Breast epithelium (tissue), 4 donors: ENCODE measurements at regions of chr2 and their contacts with region 1.

Region 1: GRCh38 chr2:176638167-176639015 is 369.1 kb downstream of the MTX2 start:
- DNase-seq: peak; percentile 27 to 70
- H3K4me3 ChIP-seq: peak overlapping the region; percentile 60 to 89 (median 77)
- H3K27ac ChIP-seq: no peak overlapping the region
- H3K4me1 ChIP-seq: no peaks in the 10 kb centered on the region
- H3K27me3 ChIP-seq: peaks cover 0 to 36% of the 10 kb centered on the region in 2 donors
- CTCF ChIP-seq: peak in 2 of 3 donors; percentile 28 to 82
- POLR2A ChIP-seq: no peak

Region 2: DNA sequence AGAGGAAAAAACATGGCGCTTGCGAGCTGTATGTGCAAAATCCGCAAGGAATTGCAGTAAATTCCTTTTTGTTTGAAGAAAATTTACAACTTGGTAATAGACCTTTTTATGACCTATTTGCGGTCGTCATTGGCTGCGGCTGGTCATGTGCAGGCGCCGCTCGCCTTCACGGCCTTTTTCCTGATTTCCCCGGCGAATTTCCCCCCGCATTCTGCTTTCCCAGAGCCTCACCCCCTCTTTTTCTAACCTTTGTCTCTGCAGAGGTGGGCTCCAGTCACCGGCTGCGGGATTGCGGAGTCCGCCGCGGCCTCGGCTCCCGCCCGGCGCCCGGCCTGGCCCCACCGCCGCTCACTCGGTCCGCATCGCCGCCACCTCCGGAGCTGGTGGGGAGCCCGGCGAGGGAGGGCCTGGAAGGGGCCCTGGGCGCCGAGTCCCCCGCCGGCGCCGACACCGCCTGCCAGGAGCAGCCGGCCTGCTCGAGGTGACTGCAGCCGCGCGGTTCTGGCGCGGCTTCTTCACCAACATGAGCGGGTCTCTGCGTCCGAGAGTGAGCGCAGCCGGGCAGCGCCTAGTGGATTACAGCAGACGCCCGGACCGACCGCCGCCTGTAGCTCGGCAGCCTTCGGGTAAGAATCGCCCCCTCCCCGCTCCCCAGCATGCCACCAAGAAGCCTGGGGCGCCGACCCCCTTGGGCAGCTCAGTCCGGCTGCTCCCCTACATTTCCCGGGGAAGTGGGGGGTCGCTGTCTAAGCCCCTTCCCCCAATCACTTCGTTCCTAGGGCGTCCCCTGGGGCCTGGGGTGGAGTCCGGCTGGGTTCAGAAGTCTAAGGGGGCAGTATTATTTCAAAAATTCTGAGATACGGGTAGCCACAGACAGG is 501.8 kb before region 1 on chr2:
- intact Hi-C with region 1: loop called (anchors 5 kb)
- DNase-seq: peak in 1 of 2 donors; percentile 47
- H3K4me3 ChIP-seq: peak overlapping the region; percentile 52 to 82 (median 71)
- H3K27ac ChIP-seq: peak overlapping the region; percentile 84 to 97
- H3K4me1 ChIP-seq: peaks cover 0 to 8% of the 10 kb centered on the region in 2 donors
- H3K27me3 ChIP-seq: peaks cover 0 to 88% of the 10 kb centered on the region in 2 donors
- CTCF ChIP-seq: no peak
- POLR2A ChIP-seq: no peak

Region 3: DNA sequence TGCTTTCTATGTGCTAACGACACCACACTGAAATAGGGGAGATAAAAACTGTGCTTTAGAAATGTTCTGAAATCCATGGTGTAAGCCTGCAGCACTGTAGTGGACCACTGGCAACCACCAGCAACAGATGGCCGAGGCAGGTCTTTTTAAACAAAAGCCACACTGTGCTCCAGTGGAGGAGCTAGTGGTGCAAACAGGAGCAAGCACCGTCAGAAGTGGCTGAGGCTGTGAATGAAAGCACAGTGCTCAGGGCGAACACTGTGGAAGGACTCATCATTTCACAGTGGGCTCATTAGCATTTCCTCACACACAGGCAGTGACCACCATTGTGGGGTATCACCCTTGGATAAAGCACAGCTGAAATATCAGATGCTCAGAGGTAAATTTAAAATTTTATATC is 392.1 kb before region 1 on chr2:
- intact Hi-C with region 1: no loop called
- DNase-seq: no peak
- H3K4me3 ChIP-seq: no peak overlapping the region
- H3K27ac ChIP-seq: no peak overlapping the region
- H3K4me1 ChIP-seq: no peaks in the 10 kb centered on the region
- H3K27me3 ChIP-seq: no peaks in the 10 kb centered on the region
- CTCF ChIP-seq: no peak
- POLR2A ChIP-seq: no peak

Region 4: DNA sequence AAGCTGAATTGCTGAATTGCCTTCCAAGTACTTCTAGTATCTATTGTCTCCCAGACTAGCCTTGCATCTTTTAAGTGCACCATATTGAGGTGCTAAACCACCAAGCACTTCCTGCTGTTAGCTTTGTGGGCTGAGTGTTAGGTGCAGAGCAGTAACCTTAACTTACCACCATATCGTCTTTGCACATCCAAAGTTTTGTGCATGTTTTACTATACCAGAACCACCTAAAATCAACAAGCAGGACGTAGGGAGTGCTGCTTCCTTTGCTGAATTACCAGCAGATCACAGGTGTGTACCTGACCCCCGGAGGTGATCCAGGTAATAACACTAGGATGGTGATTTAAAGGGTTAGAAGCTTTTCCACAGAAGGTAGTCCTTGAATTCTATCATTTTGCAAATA is 214.3 kb after region 1 on chr2:
- intact Hi-C with region 1: no loop called
- DNase-seq: no peak
- H3K4me3 ChIP-seq: no peak overlapping the region
- H3K27ac ChIP-seq: no peak overlapping the region
- H3K4me1 ChIP-seq: no peaks in the 10 kb centered on the region
- H3K27me3 ChIP-seq: no peaks in the 10 kb centered on the region
- CTCF ChIP-seq: no peak
- POLR2A ChIP-seq: no peak